Common myeloid progenitor, CD34-positive (primary cell): ENCODE measurements at regions of chr11 and their contacts with region 1.

Region 1: GRCh38 chr11:75298191-75298975 is 53.1 kb downstream of the ARRB1 start:
- DNase-seq: no peak
- H3K4me3 ChIP-seq: no peak overlapping the region
- H3K27ac ChIP-seq: no peak overlapping the region
- H3K4me1 ChIP-seq: peaks cover 0 to 19% (median 12%) of the 10 kb centered on the region in 4 experiments
- H3K27me3 ChIP-seq: no peaks in the 10 kb centered on the region

Region 2: GRCh38 chr11:75096456-75097172 is 201.8 kb before region 1 on chr11 and contains the start of gene OR2AT4:
- CTCF ChIA-PET with region 1: no interaction called
- POLR2A ChIA-PET with region 1: no interaction called
- DNase-seq: no peak
- H3K4me3 ChIP-seq: no peak within 1 kb of the TSS
- H3K27ac ChIP-seq: no peak within 1 kb of the TSS
- H3K4me1 ChIP-seq: no peaks in the 10 kb centered on the region
- H3K27me3 ChIP-seq: peaks cover 0 to 9% (median 4%) of the 10 kb centered on the region in 5 experiments

Region 3: DNA sequence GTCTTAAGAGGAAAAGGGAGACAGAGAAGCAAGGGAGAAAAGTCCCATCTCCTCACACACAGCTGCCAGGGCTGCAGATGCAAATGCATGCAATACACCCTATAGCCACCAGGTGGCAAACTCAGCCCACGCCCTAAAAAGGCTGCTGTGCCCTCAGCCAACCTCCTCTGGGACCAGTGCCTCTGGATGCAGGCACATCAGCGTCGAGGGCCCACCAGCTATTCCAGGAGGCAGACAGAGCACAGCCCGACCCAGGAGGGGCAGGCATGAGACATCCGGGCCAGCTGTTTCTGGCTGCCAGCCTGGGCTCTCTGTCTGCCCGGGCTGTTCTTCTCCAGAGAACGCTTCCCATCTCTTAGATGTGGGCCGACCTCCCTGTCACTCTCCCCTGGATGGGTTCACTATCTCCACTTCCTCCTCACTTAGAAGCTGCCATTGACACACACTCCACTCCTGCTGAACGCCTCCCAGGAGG is 18.1 kb before region 1 on chr11:
- CTCF ChIA-PET with region 1: interaction called, 15 read pairs
- POLR2A ChIA-PET with region 1: no interaction called
- DNase-seq: peak; percentile 70 to 85 (median 80)
- H3K4me3 ChIP-seq: no peak overlapping the region
- H3K27ac ChIP-seq: no peak overlapping the region
- H3K4me1 ChIP-seq: peaks cover 16 to 35% (median 32%) of the 10 kb centered on the region in 4 experiments
- H3K27me3 ChIP-seq: no peaks in the 10 kb centered on the region